Transverse colon (tissue), 4 donors: ENCODE measurements at regions of chr6 and their contacts with region 1.

Region 1: GRCh38 chr6:52020945-52021570 is 66.4 kb downstream of the PKHD1 start:
- DNase-seq: no peak
- H3K4me3 ChIP-seq: no peak overlapping the region
- H3K27ac ChIP-seq: no peak overlapping the region
- H3K4me1 ChIP-seq: peaks cover 0 to 13% (median 4%) of the 10 kb centered on the region in 4 donors
- H3K27me3 ChIP-seq: no peaks in the 10 kb centered on the region
- CTCF ChIP-seq: peak; percentile 68 to 84 (median 74)
- EP300 ChIP-seq: no peak
- POLR2A ChIP-seq: no peak

Region 2: DNA sequence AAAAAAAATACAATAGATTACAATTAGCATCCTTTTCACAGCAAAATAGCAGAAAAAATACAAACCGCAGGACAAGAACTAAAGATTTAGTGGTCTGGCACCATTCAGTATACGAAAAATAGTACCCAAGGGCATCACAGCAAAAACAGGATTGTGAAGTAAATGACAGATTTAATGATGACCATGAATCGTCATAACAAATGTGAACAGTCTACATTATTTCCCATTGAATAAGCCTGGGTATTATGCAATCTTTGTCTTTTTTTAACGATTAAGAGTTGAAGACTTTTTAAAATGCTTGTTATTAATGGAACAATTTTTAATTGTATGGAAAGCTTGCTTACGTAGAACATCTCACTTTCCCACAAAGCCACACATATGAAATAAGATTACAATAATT is 366.4 kb before region 1 on chr6:
- in situ Hi-C with region 1: no loop called
- intact Hi-C with region 1: no loop called
- DNase-seq: no peak
- H3K4me3 ChIP-seq: no peak overlapping the region
- H3K27ac ChIP-seq: no peak overlapping the region
- H3K4me1 ChIP-seq: no peaks in the 10 kb centered on the region
- H3K27me3 ChIP-seq: no peaks in the 10 kb centered on the region
- CTCF ChIP-seq: no peak
- EP300 ChIP-seq: no peak
- POLR2A ChIP-seq: no peak

Region 3: GRCh38 chr6:51855310-51856082 is 165.6 kb before region 1 on chr6:
- in situ Hi-C with region 1: loop called in 3 of 4 experiments (anchors 10 to 25 kb)
- intact Hi-C with region 1: loop called (anchors 10 kb)
- DNase-seq: no peak
- H3K4me3 ChIP-seq: no peak overlapping the region
- H3K27ac ChIP-seq: no peak overlapping the region
- H3K4me1 ChIP-seq: no peaks in the 10 kb centered on the region
- H3K27me3 ChIP-seq: no peaks in the 10 kb centered on the region
- CTCF ChIP-seq: peak; percentile 53 to 74 (median 65)
- EP300 ChIP-seq: no peak
- POLR2A ChIP-seq: no peak

Region 4: GRCh38 chr6:51936531-51936930 is 84.5 kb before region 1 on chr6:
- in situ Hi-C with region 1: no loop called
- intact Hi-C with region 1: no loop called
- DNase-seq: no peak
- H3K4me3 ChIP-seq: no peak overlapping the region
- H3K27ac ChIP-seq: no peak overlapping the region
- H3K4me1 ChIP-seq: no peaks in the 10 kb centered on the region
- H3K27me3 ChIP-seq: no peaks in the 10 kb centered on the region
- CTCF ChIP-seq: no peak
- EP300 ChIP-seq: no peak
- POLR2A ChIP-seq: no peak

Region 5: GRCh38 chr6:52243282-52243893 is 222.3 kb after region 1 on chr6:
- in situ Hi-C with region 1: no loop called
- intact Hi-C with region 1: no loop called
- DNase-seq: no peak
- H3K4me3 ChIP-seq: no peak overlapping the region
- H3K27ac ChIP-seq: no peak overlapping the region
- H3K4me1 ChIP-seq: no peaks in the 10 kb centered on the region
- H3K27me3 ChIP-seq: no peaks in the 10 kb centered on the region
- CTCF ChIP-seq: no peak
- EP300 ChIP-seq: no peak
- POLR2A ChIP-seq: no peak

Region 6: DNA sequence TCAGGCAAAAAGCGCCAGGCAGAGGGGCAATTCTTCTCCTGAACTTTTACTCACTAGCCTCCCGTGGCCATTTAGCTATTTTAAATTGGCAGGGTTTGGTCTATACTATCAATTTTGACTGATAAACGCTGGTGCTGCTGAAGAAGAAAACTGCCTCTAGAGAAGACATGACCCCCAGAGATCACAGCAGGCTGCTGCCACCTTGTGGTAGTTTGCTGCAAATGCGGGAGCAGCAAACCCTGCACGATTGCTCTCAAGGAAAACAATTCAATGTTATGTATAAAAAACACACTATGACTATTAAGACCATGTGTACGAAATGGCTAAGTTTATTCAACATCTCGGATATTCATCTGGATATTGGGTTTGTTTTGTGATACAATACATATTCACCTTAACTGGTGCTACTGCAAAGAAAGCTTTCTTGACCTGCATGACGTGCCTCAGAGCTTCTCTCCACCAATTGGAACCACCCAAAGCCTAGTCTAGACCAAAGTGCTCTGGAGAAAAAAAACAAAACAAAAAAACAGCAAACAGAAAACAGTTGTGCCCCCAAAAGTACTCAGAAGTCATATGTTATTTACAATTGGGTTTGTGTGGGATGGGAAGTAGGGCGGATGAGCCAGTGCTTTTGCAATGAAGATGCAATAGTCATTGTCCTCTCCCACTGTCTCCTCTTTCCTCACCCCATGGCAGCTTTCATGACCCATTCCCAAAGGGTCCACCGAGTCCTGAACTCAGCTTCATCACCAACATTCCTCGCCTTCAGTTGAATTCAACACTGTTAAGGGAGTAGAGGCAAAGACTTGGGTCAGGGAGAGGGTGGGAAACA is 242.9 kb after region 1 on chr6:
- in situ Hi-C with region 1: no loop called
- intact Hi-C with region 1: no loop called
- DNase-seq: peak; percentile 58
- H3K4me3 ChIP-seq: no peak overlapping the region
- H3K27ac ChIP-seq: no peak overlapping the region
- H3K4me1 ChIP-seq: no peaks in the 10 kb centered on the region
- H3K27me3 ChIP-seq: no peaks in the 10 kb centered on the region
- CTCF ChIP-seq: peak; percentile 73 to 95 (median 91)
- EP300 ChIP-seq: no peak
- POLR2A ChIP-seq: no peak